Activated CD4-positive, alpha-beta memory T cell treated with anti-CD3 and anti-CD28 coated beads, Interleukin-2, amount 10 ng/mL, durations not matched to agents 7 days and 5 days (primary cell): ENCODE measurements at regions of chr4 and their contacts with region 1.

Region 1: GRCh38 chr4:26573389-26573794 is 10.5 kb upstream of the TBC1D19 start:
- DNase-seq: no peak
- H3K4me3 Mint-ChIP-seq: no peak overlapping the region
- H3K27ac Mint-ChIP-seq: no peak overlapping the region
- H3K4me1 Mint-ChIP-seq: peaks cover 6% of the 10 kb centered on the region
- H3K27me3 Mint-ChIP-seq: peaks cover 14% of the 10 kb centered on the region

Region 2: GRCh38 chr4:26558166-26558895 is 15.1 kb before region 1 on chr4:
- CTCF ChIA-PET with region 1: no interaction called
- POLR2A ChIA-PET with region 1: no interaction called
- DNase-seq: no peak
- H3K4me3 Mint-ChIP-seq: no peak overlapping the region
- H3K27ac Mint-ChIP-seq: no peak overlapping the region
- H3K4me1 Mint-ChIP-seq: no peaks in the 10 kb centered on the region
- H3K27me3 Mint-ChIP-seq: peaks cover 20% of the 10 kb centered on the region

Region 3: GRCh38 chr4:26583865-26584652 is 10.7 kb after region 1 on chr4 and contains the start of gene TBC1D19:
- CTCF ChIA-PET with region 1: interaction called, 3 read pairs
- POLR2A ChIA-PET with region 1: interaction called, 19 read pairs
- DNase-seq: peak; percentile 91
- H3K4me3 Mint-ChIP-seq: peak within 1 kb of the TSS; percentile 90
- H3K27ac Mint-ChIP-seq: peak within 1 kb of the TSS; percentile 86
- H3K4me1 Mint-ChIP-seq: peaks cover 33% of the 10 kb centered on the region
- H3K27me3 Mint-ChIP-seq: no peaks in the 10 kb centered on the region
- total RNA-seq, gene TBC1D19: 5.6 to 7.1 TPM

Region 4: DNA sequence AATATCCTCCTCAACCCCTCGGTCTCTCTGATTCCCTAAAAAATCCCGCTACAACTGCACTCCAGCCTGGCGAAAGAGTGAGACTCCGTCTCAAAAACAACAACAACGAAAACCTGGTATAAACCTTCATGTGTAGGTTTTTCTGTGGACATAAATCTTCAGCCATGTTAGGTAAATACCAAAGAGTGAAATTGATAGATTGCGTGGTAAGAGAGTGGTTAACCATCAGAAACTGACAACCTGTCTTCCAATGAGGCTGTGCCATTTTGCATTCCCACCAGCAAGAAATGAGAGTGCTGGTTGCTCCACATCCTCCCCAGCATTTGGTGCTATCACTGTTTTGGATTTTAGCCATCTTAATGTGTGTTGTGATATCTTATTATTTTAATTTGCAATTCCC is 21.4 kb after region 1 on chr4:
- CTCF ChIA-PET with region 1: no interaction called
- POLR2A ChIA-PET with region 1: no interaction called
- DNase-seq: no peak
- H3K4me3 Mint-ChIP-seq: no peak overlapping the region
- H3K27ac Mint-ChIP-seq: no peak overlapping the region
- H3K4me1 Mint-ChIP-seq: no peaks in the 10 kb centered on the region
- H3K27me3 Mint-ChIP-seq: no peaks in the 10 kb centered on the region

Region 5: DNA sequence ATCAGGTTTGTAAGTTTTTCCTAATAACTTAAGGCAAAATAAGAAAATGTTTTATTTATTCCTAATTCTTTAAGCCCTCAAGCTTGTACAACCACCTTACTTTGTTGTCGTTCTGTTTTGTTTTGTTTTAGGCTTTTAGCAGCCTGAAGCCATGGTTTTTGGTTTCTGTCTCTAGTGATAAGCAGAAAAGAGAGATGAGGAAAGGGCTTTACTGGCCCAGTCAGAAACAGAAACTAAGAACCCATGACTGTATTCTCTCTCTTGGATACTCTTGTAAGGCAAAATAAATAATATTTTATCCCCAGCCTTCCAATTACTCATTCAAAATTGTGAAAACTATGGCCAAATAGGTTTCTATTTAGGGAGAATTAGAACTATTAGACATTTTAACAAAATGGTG is 39.8 kb after region 1 on chr4:
- CTCF ChIA-PET with region 1: no interaction called
- POLR2A ChIA-PET with region 1: no interaction called
- DNase-seq: no peak
- H3K4me3 Mint-ChIP-seq: no peak overlapping the region
- H3K27ac Mint-ChIP-seq: no peak overlapping the region
- H3K4me1 Mint-ChIP-seq: peaks cover 6% of the 10 kb centered on the region
- H3K27me3 Mint-ChIP-seq: no peaks in the 10 kb centered on the region